T-cell (primary cell): ENCODE measurements at regions of chr7 and their contacts with region 1.

Region 1: DNA sequence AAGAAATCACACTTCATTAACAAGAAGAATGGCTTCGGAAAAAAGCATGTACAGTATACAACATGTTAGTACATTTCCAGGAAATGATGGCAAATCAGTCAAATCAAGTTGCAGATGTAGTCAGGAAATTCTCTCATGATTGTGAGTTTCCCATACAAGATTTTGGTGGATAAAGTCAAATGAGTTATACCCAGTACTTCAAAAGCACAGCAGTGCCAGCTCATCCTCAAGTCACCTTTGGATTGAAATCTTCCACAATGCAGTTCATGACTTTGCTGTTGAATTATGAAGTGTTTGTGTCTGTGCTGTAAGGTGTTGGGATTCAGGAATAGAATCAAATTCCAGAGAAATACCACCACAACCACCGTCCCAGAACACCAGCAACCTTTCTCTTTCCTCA is 301.3 kb upstream of the BMPER start:
- DNase-seq: no peak
- ATAC-seq: no peak
- H3K4me3 ChIP-seq: no peak overlapping the region
- H3K4me3 Mint-ChIP-seq: no peak overlapping the region
- H3K27ac ChIP-seq: no peak overlapping the region
- H3K27ac Mint-ChIP-seq: no peak overlapping the region
- H3K4me1 ChIP-seq: no peaks in the 10 kb centered on the region
- H3K4me1 Mint-ChIP-seq: no peaks in the 10 kb centered on the region
- H3K27me3 ChIP-seq: no peaks in the 10 kb centered on the region
- H3K27me3 Mint-ChIP-seq: no peaks in the 10 kb centered on the region

Region 2: DNA sequence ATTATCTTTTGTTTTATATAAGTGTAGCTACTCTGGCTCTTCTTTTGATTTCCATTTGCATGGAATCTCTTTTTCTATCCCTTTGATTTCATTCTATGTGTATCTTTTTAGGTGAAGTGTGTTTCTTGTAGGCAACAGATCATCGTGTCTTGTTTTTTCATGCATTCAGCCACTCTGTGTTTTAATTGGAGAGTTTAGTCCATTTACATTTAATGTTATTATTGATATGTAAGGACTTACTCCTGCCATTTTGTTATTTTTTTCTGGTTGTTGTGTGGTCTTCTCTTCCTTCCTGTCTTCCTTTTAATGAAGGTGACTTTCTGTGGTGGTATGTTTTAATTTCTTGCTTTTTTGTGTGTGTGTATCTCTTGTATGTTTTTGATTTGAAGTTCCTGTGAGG is 393.1 kb before region 1 on chr7:
- CTCF ChIA-PET with region 1: no interaction called
- POLR2A ChIA-PET with region 1: no interaction called
- DNase-seq: no peak
- ATAC-seq: no peak
- H3K4me3 ChIP-seq: no peak overlapping the region
- H3K4me3 Mint-ChIP-seq: no peak overlapping the region
- H3K27ac ChIP-seq: no peak overlapping the region
- H3K27ac Mint-ChIP-seq: no peak overlapping the region
- H3K4me1 ChIP-seq: no peaks in the 10 kb centered on the region
- H3K4me1 Mint-ChIP-seq: no peaks in the 10 kb centered on the region
- H3K27me3 ChIP-seq: no peaks in the 10 kb centered on the region
- H3K27me3 Mint-ChIP-seq: no peaks in the 10 kb centered on the region

Region 3: DNA sequence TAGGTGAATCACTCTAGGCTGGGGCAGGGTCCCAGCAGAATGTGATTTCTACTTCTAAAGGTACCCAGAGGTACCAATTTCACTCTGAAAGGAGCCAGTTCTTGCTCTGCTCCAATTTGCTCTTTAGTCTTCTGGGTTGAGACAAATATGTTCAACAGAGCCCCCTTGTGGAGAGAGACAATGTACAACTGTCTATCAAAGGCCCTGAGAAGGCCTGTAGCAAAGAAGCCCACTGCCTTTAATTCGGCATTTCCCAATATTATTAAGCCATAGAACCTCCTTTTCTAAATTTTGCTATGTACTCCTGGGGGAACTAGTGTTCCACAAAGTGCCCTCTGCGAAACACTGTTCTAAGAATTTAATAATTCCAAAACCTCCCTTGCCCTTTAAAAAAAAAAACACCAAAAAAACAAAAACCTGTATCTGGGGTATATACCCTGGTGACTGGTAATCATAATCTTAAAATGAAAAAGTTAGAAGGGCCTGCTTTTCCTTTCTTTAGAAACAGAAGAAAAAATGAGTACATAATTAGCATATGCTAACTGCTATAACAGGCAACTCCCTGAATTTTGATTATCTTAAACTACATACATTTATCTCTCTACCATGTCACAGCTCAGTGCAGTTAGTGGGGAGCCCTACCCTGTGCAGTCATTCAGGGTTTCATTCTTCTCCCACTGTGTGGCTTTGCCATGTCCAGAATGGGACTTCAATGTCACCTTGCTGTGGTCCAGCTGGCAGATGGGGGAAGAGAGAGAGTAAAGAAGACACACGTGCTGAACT is 140.4 kb after region 1 on chr7:
- CTCF ChIA-PET with region 1: no interaction called
- POLR2A ChIA-PET with region 1: no interaction called
- DNase-seq: peak in 1 of 35 experiments; percentile 22
- ATAC-seq: no peak
- H3K4me3 ChIP-seq: no peak overlapping the region
- H3K4me3 Mint-ChIP-seq: no peak overlapping the region
- H3K27ac ChIP-seq: no peak overlapping the region
- H3K27ac Mint-ChIP-seq: no peak overlapping the region
- H3K4me1 ChIP-seq: no peaks in the 10 kb centered on the region
- H3K4me1 Mint-ChIP-seq: no peaks in the 10 kb centered on the region
- H3K27me3 ChIP-seq: no peaks in the 10 kb centered on the region
- H3K27me3 Mint-ChIP-seq: no peaks in the 10 kb centered on the region

Region 4: GRCh38 chr7:33932832-33933468 is 328.9 kb after region 1 on chr7:
- CTCF ChIA-PET with region 1: interaction called in 1 of 2 experiments, 11 read pairs
- POLR2A ChIA-PET with region 1: no interaction called
- DNase-seq: peak; percentile 1 to 72 (median 44)
- ATAC-seq: peak in 2 of 4 experiments; percentile 53 to 56
- H3K4me3 ChIP-seq: no peak overlapping the region
- H3K4me3 Mint-ChIP-seq: no peak overlapping the region
- H3K27ac ChIP-seq: no peak overlapping the region
- H3K27ac Mint-ChIP-seq: no peak overlapping the region
- H3K4me1 ChIP-seq: no peaks in the 10 kb centered on the region
- H3K4me1 Mint-ChIP-seq: peaks cover 0 to 2% (median 2%) of the 10 kb centered on the region in 3 donors
- H3K27me3 ChIP-seq: peaks cover 0 to 8% of the 10 kb centered on the region in 2 experiments
- H3K27me3 Mint-ChIP-seq: peaks cover 17 to 24% of the 10 kb centered on the region in 2 donors